ENCODE measurements at regions of chr2 and their contacts with region 1.

Region 1: DNA sequence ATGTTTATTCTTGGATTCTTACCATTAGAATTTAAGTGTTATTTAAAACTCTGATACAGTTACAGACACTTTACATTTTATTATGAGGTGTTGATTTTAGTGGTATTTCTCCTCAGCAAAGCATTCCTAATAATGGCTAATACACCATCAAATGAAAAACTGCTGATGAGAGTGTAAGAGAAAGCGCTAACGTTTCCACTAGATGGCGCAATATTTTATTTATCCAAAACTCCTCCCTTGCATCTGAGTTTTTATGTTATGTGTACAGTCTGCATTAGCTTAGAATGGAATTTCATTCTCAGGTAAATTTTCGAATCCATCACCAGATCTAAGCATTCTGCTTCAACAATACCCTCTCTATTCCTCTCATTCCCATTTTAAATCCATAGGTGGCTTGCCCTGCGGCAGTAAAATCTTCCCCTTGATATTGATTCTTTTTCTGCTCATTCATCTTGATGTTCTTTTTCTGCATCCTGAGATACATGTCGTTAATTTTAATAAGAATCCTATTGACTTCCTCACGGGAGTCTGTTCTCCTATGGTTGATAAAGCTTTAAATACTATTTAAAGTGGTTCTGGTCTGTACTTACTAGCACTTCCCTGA is 53.9 kb downstream of the PRKRA start:
- DNase-seq: peak in 4 of 14 experiments; percentile 10 to 70 (median 58)
- ATAC-seq: peak; percentile 76
- H3K4me3 ChIP-seq: no peak overlapping the region
- H3K4me3 Mint-ChIP-seq: no peak overlapping the region
- H3K27ac ChIP-seq: no peak overlapping the region
- H3K27ac Mint-ChIP-seq: no peak overlapping the region
- H3K4me1 ChIP-seq: no peaks in the 10 kb centered on the region
- H3K4me1 Mint-ChIP-seq: no peaks in the 10 kb centered on the region
- H3K27me3 ChIP-seq: no peaks in the 10 kb centered on the region
- H3K27me3 Mint-ChIP-seq: peaks cover 5% of the 10 kb centered on the region
- CTCF ChIP-seq: peak; percentile 76

Region 2: DNA sequence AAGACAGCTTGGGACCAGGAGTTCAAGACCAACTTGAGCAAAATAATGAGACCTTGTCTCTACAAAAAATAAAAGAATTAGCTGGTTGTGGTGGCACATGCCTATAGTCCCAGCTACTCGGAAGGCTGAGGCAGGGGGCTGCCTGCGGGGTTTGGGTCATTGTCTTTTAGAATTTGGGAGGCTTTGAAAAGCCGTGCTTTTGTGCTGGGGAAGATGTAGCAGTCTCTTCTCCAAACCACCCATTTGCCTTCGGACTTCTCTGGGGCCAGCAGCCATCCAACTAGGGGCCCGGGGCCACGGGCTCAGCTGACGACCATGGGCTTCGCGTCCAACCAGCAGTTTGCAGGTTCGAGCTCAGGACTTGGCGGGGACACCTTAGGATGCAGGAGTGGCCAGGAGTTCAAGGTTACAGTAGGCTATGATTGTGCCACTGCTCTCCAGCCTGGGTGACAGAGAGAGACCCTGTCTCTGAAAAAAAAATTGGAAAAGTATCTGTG is 60.3 kb after region 1 on chr2:
- CTCF ChIA-PET with region 1: no interaction called
- POLR2A ChIA-PET with region 1: no interaction called
- intact Hi-C with region 1: no loop called
- DNase-seq: no peak
- ATAC-seq: no peak
- H3K4me3 ChIP-seq: no peak overlapping the region
- H3K4me3 Mint-ChIP-seq: no peak overlapping the region
- H3K27ac ChIP-seq: no peak overlapping the region
- H3K27ac Mint-ChIP-seq: no peak overlapping the region
- H3K4me1 ChIP-seq: no peaks in the 10 kb centered on the region
- H3K4me1 Mint-ChIP-seq: no peaks in the 10 kb centered on the region
- H3K27me3 ChIP-seq: no peaks in the 10 kb centered on the region
- H3K27me3 Mint-ChIP-seq: no peaks in the 10 kb centered on the region
- CTCF ChIP-seq: no peak

Region 3: DNA sequence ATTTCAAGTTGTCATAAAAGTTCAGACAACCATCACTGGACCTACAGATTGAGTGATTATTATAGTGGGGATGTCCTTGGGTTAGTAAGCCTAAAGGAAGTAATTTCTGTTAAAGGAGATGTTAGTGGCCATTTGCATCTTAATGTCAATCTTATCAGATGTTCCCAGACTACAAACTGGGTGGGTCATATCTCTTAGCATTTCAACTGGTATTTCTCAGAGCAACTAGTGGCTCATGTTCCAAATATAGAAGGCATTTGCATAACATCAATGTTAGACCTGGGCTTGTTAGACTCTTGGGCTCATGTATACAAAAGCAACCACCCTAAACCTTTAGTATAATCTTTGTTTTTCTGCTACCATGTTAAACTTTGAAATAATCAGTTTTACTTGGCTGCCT is 101.0 kb after region 1 on chr2:
- CTCF ChIA-PET with region 1: no interaction called
- POLR2A ChIA-PET with region 1: no interaction called
- intact Hi-C with region 1: loop called in 1 of 2 experiments (anchors 10 kb)
- DNase-seq: no peak
- ATAC-seq: no peak
- H3K4me3 ChIP-seq: no peak overlapping the region
- H3K4me3 Mint-ChIP-seq: no peak overlapping the region
- H3K27ac ChIP-seq: no peak overlapping the region
- H3K27ac Mint-ChIP-seq: no peak overlapping the region
- H3K4me1 ChIP-seq: no peaks in the 10 kb centered on the region
- H3K4me1 Mint-ChIP-seq: no peaks in the 10 kb centered on the region
- H3K27me3 ChIP-seq: no peaks in the 10 kb centered on the region
- H3K27me3 Mint-ChIP-seq: no peaks in the 10 kb centered on the region
- CTCF ChIP-seq: no peak

Region 4: DNA sequence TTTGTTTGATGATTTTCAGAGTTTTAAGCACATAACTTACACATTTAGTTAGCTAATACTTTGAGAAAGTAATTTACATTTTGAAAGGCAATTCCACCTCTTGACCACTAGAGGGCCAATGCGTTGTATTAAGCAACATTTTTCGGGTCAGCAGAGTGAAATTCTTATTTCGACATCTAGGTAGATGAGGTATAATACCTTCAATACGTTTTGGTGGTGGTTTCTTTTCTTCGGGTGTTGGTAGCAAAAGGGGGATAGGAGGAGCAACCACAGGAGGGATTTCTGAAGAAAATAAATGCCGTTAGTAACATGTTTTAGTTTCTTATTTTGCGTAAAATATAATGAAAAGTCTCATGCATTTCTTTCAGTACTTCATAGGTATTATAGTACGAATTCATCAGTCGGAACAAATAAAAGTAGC is 303.8 kb after region 1 on chr2:
- CTCF ChIA-PET with region 1: no interaction called
- POLR2A ChIA-PET with region 1: no interaction called
- intact Hi-C with region 1: loop called in 1 of 2 experiments (anchors 5 kb)
- DNase-seq: peak in 3 of 14 experiments; percentile 9 to 54 (median 30)
- ATAC-seq: no peak
- H3K4me3 ChIP-seq: no peak overlapping the region
- H3K4me3 Mint-ChIP-seq: no peak overlapping the region
- H3K27ac ChIP-seq: no peak overlapping the region
- H3K27ac Mint-ChIP-seq: no peak overlapping the region
- H3K4me1 ChIP-seq: no peaks in the 10 kb centered on the region
- H3K4me1 Mint-ChIP-seq: no peaks in the 10 kb centered on the region
- H3K27me3 ChIP-seq: no peaks in the 10 kb centered on the region
- H3K27me3 Mint-ChIP-seq: no peaks in the 10 kb centered on the region
- CTCF ChIP-seq: peak; percentile 98